Tibial artery (tissue), 4 donors: ENCODE measurements at regions of chr17 and their contacts with region 1.

Region 1: GRCh38 chr17:33990943-33991706 is 264.0 kb upstream of the CCL2 start:
- DNase-seq: no peak
- H3K4me3 ChIP-seq: no peak overlapping the region
- H3K27ac ChIP-seq: no peak overlapping the region
- H3K4me1 ChIP-seq: no peaks in the 10 kb centered on the region
- H3K27me3 ChIP-seq: no peaks in the 10 kb centered on the region
- CTCF ChIP-seq: no peak

Region 2: DNA sequence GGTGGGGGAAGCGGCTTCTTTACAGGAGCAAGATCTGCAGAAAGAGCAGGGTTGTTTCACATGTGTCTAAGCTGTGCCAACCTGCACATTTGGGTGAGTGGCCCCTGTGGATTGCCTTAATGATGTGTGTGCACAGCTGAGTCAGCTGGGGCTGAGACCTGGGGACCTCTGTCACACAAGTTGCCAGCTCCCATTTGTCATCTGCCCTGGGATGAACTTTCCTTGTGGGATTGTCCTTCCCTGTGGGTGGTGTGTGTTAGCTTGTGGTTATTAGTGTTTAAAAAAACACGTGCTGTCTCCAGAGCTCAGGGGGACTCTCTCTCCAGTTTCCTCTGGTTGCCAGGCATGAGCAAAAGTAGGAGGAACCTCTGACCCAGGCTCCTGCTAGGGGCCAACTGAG is 136.5 kb before region 1 on chr17:
- intact Hi-C with region 1: no loop called
- DNase-seq: no peak
- H3K4me3 ChIP-seq: no peak overlapping the region
- H3K27ac ChIP-seq: no peak overlapping the region
- H3K4me1 ChIP-seq: no peaks in the 10 kb centered on the region
- H3K27me3 ChIP-seq: peaks cover 0 to 3% of the 10 kb centered on the region in 2 donors
- CTCF ChIP-seq: no peak

Region 3: DNA sequence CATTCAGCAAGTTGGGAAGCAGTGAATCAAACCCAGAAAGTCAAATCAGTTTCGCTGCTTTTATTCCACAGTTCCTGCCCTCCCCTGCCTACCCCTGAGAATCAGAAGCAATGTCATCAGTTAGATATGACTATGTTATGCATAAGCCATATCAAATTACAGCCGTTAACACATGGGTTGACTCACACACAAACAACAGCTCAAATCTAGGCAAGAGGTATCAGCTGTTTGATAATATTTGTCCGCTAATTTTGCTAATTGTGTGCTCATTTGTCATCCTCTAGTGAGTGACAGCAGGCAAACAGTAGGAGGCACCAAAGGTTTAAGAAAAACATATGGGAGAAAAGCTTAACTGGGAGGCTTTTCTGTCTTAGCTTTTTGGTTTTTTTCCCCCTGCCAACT is 63.4 kb before region 1 on chr17:
- intact Hi-C with region 1: no loop called
- DNase-seq: no peak
- H3K4me3 ChIP-seq: no peak overlapping the region
- H3K27ac ChIP-seq: no peak overlapping the region
- H3K4me1 ChIP-seq: no peaks in the 10 kb centered on the region
- H3K27me3 ChIP-seq: peaks cover 0 to 14% of the 10 kb centered on the region in 2 donors
- CTCF ChIP-seq: no peak

Region 4: GRCh38 chr17:33949100-33949499 is 42.0 kb before region 1 on chr17:
- intact Hi-C with region 1: loop called (anchors 5 kb)
- DNase-seq: no peak
- H3K4me3 ChIP-seq: no peak overlapping the region
- H3K27ac ChIP-seq: no peak overlapping the region
- H3K4me1 ChIP-seq: no peaks in the 10 kb centered on the region
- H3K27me3 ChIP-seq: no peaks in the 10 kb centered on the region
- CTCF ChIP-seq: no peak

Region 5: GRCh38 chr17:34199932-34200534 is 208.9 kb after region 1 on chr17:
- intact Hi-C with region 1: no loop called
- DNase-seq: peak; percentile 76 to 81
- H3K4me3 ChIP-seq: no peak overlapping the region
- H3K27ac ChIP-seq: no peak overlapping the region
- H3K4me1 ChIP-seq: peaks cover 0 to 9% (median 2%) of the 10 kb centered on the region in 4 donors
- H3K27me3 ChIP-seq: peaks cover 0 to 5% of the 10 kb centered on the region in 2 donors
- CTCF ChIP-seq: peak; percentile 99 to 100